Activated T-helper 1 cell treated with anti-CD3 and anti-CD28 coated beads, Interleukin-12 subunit alpha, Interleukin-12 subunit beta, Interleukin-2, Interleukin-4 antibody, amounts not matched to agents 30 ng/mL and 10 ng/mL and 1 ng/mL, durations not matched to agents 14 hours and 24 hours and 36 hours (primary cell): ENCODE measurements at regions of chr2 and their contacts with region 1.

Region 1: GRCh38 chr2:169798718-169799592 is at the start of gene SSB:
- DNase-seq: peak; percentile 89
- H3K4me3 Mint-ChIP-seq: peak within 1 kb of the TSS; percentile 93
- H3K27ac Mint-ChIP-seq: peak within 1 kb of the TSS; percentile 89
- H3K4me1 Mint-ChIP-seq: peaks cover 32% of the 10 kb centered on the region
- H3K27me3 Mint-ChIP-seq: peaks cover 10% of the 10 kb centered on the region
- total RNA-seq, gene SSB: 101 and 107 TPM in 2 replicates

Region 2: DNA sequence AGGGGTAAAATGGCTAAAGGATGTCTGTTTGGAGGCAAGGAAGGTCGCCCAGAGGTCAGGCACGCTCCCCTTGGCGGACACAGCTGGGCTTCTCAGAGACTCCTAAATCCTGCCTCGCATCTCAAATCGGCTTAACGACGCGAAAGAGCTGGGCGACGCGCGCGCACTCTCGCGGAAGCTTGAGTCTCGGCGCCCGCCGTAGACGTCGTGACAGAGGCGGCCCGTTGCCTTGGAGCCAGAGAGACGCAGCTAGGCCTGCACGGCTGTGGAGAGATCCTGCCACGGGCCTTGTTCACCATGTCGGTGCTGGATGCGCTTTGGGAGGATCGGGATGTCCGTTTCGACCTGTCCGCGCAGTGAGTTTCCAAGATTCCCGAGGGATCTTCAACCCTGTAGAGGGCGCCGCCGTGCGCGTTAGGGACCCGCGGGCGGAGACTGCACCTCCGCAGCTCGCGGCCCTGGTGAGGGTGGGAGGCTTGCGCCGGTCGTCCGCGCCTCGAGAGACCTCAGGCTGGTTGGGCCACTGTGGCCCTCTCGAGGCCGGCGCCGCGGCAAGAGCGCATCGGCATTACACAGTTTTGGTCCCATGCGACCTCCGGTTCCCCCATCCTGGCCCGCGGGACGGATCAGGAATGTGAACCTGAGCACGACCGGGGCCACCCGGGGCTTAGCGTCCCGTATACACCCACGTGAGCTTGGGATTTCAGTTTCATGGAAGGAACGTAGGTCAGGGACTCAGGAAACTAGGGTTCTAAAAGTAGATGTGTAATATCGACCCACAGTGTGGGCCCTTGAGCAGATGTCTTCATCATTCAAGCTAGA is 319.5 kb before region 1 on chr2 and contains the start of gene BBS5:
- intact Hi-C with region 1: loop called (anchors 2 kb)
- DNase-seq: peak; percentile 62
- H3K4me3 Mint-ChIP-seq: peak within 1 kb of the TSS; percentile 88
- H3K27ac Mint-ChIP-seq: peak within 1 kb of the TSS; percentile 41
- H3K4me1 Mint-ChIP-seq: peaks cover 14% of the 10 kb centered on the region
- H3K27me3 Mint-ChIP-seq: peaks cover 2% of the 10 kb centered on the region
- total RNA-seq, gene BBS5: 3.3 and 3.6 TPM in 2 replicates

Region 3: DNA sequence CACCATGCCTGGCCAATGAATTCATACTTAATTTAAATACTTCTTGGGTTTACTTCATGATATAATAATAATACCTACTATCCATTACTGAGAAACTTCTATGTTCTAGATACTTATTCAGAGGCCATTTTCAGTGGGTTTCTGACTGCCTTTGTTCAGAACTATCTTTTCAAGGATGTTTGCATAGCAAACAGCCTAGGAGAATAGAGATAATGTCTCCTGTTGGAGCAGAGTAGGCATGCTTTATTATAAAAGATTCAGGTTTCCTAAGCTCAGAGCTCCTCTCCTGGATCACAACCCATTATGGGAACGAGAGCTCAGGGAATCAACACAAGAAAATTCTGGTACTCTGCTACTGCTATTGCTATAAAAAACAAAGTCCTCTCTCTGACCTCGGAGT is 236.4 kb before region 1 on chr2:
- intact Hi-C with region 1: no loop called
- DNase-seq: no peak
- H3K4me3 Mint-ChIP-seq: no peak overlapping the region
- H3K27ac Mint-ChIP-seq: no peak overlapping the region
- H3K4me1 Mint-ChIP-seq: no peaks in the 10 kb centered on the region
- H3K27me3 Mint-ChIP-seq: no peaks in the 10 kb centered on the region

Region 4: GRCh38 chr2:169683054-169683424 is 115.9 kb before region 1 on chr2:
- intact Hi-C with region 1: loop called (anchors 2 kb)
- DNase-seq: peak; percentile 24
- H3K4me3 Mint-ChIP-seq: no peak overlapping the region
- H3K27ac Mint-ChIP-seq: no peak overlapping the region
- H3K4me1 Mint-ChIP-seq: peaks cover 20% of the 10 kb centered on the region
- H3K27me3 Mint-ChIP-seq: peaks cover 5% of the 10 kb centered on the region

Region 5: DNA sequence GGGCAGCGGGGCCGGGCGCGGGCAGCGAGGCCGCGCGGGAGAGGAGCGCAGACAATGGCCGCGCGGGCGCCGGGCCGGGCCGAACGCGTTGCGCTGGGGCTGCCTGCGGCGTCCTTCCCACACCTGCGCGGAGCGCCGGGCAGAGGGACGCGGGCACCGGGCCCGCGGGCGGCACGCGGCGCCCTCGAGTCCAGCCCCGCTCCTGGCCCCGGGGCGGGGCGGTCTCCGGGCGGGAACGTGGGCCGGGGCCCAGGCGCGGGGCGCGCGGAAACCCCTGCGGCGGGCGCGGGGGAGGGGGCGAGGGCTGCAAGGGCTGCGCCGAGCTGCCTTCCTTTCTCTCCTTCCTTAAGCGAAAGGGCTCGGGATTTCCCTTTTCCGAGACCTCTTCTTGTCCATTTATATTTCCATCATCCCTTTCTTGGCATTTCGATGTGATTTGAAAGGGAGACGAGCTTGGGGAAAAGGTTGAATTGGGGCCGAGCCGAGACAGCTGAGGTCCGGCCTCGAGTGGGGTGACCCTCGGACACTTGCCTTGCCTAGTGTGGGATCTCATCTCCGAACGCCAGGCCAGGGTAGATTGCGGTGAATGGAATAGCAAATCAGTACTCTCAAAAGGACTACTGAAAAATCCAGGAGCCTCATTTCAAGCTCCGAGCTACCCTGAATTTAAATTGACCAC is 64.6 kb before region 1 on chr2:
- intact Hi-C with region 1: loop called (anchors 2 kb)
- DNase-seq: no peak
- H3K4me3 Mint-ChIP-seq: peak overlapping the region; percentile 85
- H3K27ac Mint-ChIP-seq: peak overlapping the region; percentile 40
- H3K4me1 Mint-ChIP-seq: peaks cover 31% of the 10 kb centered on the region
- H3K27me3 Mint-ChIP-seq: peaks cover 39% of the 10 kb centered on the region

Region 6: DNA sequence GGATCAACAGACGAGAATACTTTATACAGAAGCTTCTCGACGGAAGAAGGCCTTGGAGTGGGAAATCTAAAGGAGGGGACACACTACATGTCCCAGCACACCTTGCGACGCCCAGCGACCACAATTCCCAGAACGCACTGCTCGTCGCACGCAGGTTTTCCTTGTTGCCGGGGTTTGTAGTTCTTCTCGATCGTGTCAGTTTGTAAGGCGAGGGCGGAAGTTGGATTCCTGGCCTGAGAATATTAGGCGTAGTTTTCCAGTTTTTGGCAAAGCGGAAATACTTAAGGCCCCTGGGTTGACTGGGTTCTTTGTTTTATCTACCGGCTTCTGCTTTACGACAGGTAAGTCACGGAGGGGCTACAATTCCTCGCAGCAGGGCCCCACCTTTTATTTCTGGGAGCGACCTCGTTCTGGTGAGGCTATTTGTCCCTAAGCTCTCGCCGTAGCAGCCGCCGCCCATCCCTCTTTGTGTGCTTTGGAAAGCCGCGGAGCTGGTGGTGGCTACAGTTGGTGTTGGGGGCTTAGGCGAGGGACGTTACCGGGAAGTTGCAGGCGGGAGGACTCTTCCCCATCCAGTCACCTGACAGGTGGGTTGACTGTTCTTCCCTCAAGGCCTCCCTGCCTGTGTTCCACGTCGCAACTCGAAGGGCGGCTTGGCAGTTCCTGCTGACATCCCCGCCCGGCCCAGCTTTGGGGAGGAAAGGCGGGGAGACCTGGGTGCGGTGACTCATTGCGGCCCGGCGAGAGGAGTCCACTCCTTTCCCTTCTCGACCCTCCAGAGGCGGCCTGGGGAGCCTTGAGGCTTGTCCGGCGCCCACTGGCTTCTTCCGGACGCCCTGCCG is 1888.6 kb after region 1 on chr2 and contains the start of gene DYNC1I2:
- intact Hi-C with region 1: loop called (anchors 5 kb)
- DNase-seq: peak; percentile 63
- H3K4me3 Mint-ChIP-seq: peak within 1 kb of the TSS; percentile 85
- H3K27ac Mint-ChIP-seq: peak within 1 kb of the TSS; percentile 84
- H3K4me1 Mint-ChIP-seq: peaks cover 20% of the 10 kb centered on the region
- H3K27me3 Mint-ChIP-seq: peaks cover 10% of the 10 kb centered on the region
- total RNA-seq, gene DYNC1I2: 49.3 and 49.4 TPM in 2 replicates